Activated T-helper 1 cell treated with anti-CD3 and anti-CD28 coated beads, Interleukin-12 subunit alpha, Interleukin-12 subunit beta, Interleukin-2, Interleukin-4 antibody, amounts not matched to agents 30 ng/mL and 10 ng/mL and 1 ng/mL, durations not matched to agents 14 hours and 24 hours and 36 hours (primary cell): ENCODE measurements at regions of chr19 and their contacts with region 1.

Region 1: GRCh38 chr19:53333463-53334449 is at the start of gene ZNF845:
- DNase-seq: peak; percentile 95
- H3K4me3 Mint-ChIP-seq: peak within 1 kb of the TSS; percentile 91
- H3K27ac Mint-ChIP-seq: peak within 1 kb of the TSS; percentile 80
- H3K4me1 Mint-ChIP-seq: peaks cover 10% of the 10 kb centered on the region
- H3K27me3 Mint-ChIP-seq: no peaks in the 10 kb centered on the region
- total RNA-seq, gene ZNF845: 6.5 and 6.7 TPM in 2 replicates

Region 2: GRCh38 chr19:52139252-52140031 is 1194.3 kb before region 1 on chr19 and contains the start of gene ZNF616:
- intact Hi-C with region 1: loop called (anchors 1 kb)
- DNase-seq: peak; percentile 94
- H3K4me3 Mint-ChIP-seq: peak within 1 kb of the TSS; percentile 98
- H3K27ac Mint-ChIP-seq: peak within 1 kb of the TSS; percentile 94
- H3K4me1 Mint-ChIP-seq: peaks cover 23% of the 10 kb centered on the region
- H3K27me3 Mint-ChIP-seq: no peaks in the 10 kb centered on the region
- total RNA-seq, gene ZNF616: 4.1 and 6.7 TPM in 2 replicates

Region 3: DNA sequence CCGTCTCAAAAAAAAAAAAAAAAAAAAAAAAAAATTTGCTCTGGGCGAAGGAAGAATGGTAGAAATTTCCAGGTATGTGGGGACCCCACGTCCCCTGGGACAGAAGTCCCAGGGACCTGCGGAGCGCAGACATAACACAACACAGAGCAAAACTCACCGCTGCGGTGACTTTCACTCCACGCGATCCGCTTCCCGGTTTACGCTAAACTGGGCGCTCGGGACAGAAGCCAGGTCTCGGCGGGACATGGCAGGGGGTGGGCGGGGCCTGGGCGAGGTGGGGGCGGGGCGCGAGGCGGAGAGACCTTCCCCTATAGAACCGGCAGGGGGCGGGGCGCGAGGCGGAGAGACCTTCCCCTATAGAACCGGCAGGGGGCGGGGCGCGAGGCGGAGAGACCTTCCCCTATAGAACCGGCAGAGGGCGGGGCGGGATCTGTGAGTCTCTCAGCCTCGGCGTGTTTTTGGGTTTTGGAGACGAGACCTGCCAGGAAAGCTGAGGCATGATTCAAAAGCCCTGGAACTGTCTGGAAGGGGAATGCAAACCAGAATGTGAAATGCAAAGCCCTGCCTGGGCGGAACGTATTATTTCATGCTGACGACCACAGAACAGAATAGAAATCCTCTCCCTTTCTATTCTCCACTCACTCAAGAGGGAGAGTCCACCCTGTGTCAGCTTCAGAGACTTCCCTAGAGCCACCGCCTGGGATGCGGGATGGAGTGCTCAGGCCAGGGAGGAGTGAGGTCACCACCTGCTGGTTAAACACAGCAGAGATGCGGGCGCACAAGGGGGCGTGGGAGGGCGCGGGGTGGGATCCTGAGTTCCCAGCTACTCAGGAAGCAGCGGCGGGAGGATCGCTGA is 340.2 kb before region 1 on chr19:
- intact Hi-C with region 1: loop called (anchors 1 kb)
- DNase-seq: peak; percentile 79
- H3K4me3 Mint-ChIP-seq: peak overlapping the region; percentile 82
- H3K27ac Mint-ChIP-seq: no peak overlapping the region
- H3K4me1 Mint-ChIP-seq: peaks cover 6% of the 10 kb centered on the region
- H3K27me3 Mint-ChIP-seq: peaks cover 4% of the 10 kb centered on the region

Region 4: DNA sequence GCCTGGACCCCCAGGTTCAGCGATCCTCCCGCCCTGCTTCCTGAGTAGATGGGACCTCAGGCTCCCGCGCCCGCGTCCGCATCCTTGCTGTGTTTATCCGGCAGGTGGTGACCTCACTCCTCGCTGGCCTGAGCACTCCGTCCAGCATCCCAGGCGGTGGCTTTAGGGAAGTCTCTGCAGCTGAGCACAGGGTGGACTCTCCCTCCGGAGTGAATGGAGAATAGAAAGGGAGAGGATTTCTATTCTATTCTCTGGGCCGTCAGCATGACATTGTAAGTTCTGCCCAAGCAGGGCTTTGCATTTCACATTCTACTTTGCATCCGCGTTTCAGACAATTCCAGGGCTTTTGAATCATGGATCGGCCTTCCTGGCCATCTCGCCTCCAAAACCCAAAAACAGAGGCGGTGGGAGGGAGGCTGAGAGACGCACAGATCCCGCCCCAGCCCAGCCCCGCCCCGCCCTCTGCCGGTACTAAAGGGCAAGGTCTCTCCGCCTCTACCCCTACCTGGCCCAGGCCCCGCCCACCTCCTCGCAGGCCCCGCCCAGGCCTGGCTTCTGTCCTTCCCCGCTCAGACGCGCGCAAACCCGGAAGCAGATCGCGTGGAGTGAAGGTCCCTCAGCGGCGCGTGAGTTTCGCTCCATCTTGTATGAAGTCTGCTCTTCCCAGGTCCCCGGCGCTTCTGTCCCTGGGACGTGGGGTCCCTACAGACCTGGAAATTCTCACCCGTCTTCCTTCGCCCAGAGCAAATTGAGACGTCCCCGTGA is 31.6 kb after region 1 on chr19 and contains the start of gene ZNF525:
- intact Hi-C with region 1: loop called (anchors 1 kb)
- DNase-seq: peak; percentile 93
- H3K4me3 Mint-ChIP-seq: peak within 1 kb of the TSS; percentile 93
- H3K27ac Mint-ChIP-seq: peak within 1 kb of the TSS; percentile 91
- H3K4me1 Mint-ChIP-seq: peaks cover 17% of the 10 kb centered on the region
- H3K27me3 Mint-ChIP-seq: no peaks in the 10 kb centered on the region
- total RNA-seq, gene ZNF525: 16.5 and 19.0 TPM in 2 replicates

Region 5: DNA sequence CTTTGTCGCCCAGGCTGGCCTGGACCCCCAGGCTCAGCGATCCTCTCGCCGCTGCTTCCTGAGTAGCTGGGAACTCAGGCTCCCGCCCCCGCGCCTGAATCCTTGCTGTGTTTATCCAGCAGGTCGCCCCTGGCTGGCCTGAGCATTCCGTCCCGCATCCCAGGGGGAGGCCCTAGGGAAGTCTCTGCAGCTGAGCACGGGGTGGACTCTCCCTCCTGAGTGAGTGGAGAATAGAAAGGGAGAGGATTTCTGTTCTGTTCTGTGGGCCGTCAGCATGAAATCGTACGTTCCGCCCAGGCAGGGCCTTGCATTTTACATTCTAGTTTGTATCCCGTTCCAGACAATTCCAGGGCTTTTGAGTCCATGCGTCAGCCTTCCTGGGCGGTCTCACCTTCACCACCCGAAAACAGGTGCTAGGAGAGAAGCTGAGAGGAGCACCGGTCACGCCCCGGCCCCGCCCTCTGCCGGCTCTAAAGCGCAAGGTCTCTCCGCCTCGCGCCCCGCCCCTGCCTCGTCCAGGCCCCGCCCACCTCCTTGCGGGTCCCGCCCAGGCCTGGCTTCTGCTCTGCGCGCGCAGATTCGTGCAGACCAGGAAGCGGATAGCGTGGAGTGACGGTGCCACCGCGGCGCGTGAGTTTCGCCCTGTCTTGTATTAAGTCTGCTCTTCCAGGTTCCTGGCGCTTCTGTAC is 97.8 kb after region 1 on chr19 and contains the start of gene ZNF761:
- intact Hi-C with region 1: loop called (anchors 1 kb)
- DNase-seq: peak; percentile 96
- H3K4me3 Mint-ChIP-seq: peak within 1 kb of the TSS; percentile 88
- H3K27ac Mint-ChIP-seq: peak within 1 kb of the TSS; percentile 94
- H3K4me1 Mint-ChIP-seq: peaks cover 25% of the 10 kb centered on the region
- H3K27me3 Mint-ChIP-seq: no peaks in the 10 kb centered on the region
- total RNA-seq, gene ZNF761: 9.9 and 12.3 TPM in 2 replicates